ENCODE measurements at regions of chr3 and their contacts with region 1.

Region 1: GRCh38 chr3:186534113-186534669 is 10.0 kb downstream of the CRYGS start:
- DNase-seq: peak; percentile 57
- ATAC-seq: peak; percentile 95
- H3K4me3 Mint-ChIP-seq: no peak overlapping the region
- H3K27ac Mint-ChIP-seq: no peak overlapping the region
- H3K4me1 Mint-ChIP-seq: peaks cover 35% of the 10 kb centered on the region
- H3K27me3 Mint-ChIP-seq: no peaks in the 10 kb centered on the region

Region 2: DNA sequence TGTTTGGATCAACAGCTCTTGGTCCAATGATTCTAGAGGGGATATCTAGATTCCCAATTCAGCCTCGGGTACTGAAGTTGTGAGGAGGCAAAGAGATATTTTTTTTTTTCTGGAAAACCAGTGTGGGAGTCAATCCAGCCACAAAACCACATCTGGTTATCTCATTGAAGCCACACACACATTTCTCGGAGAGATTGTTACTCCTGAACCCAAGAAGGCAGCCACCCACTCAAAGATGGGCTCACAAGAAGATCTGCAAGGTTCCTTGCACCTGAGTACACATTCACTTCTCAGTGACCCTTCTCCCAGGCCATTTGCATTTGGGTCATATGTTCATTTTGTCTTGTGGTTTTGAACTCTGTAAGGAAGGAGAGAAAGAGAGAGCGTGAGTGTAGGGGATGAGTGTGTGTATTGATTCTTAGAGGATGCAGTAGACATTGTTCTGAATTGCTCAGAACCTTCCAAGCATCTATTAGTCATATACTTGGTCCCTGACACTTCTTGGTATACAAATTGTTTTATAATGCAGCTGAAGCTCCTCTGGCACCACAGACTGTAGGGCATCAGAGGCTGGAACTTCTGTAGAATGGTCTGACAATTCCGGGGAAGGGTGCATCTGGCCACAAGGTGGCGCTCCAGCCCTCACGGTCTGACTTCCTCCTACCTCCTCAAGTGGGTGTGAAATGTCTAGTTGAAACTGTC is 557.1 kb before region 1 on chr3:
- CTCF ChIA-PET with region 1: interaction called, 47 read pairs
- POLR2A ChIA-PET with region 1: no interaction called
- DNase-seq: peak; percentile 88
- ATAC-seq: peak; percentile 96
- H3K4me3 Mint-ChIP-seq: no peak overlapping the region
- H3K27ac Mint-ChIP-seq: no peak overlapping the region
- H3K4me1 Mint-ChIP-seq: peaks cover 12% of the 10 kb centered on the region
- H3K27me3 Mint-ChIP-seq: peaks cover 25% of the 10 kb centered on the region

Region 3: GRCh38 chr3:186519021-186519658 is 15.1 kb before region 1 on chr3:
- CTCF ChIA-PET with region 1: interaction called, 44 read pairs
- POLR2A ChIA-PET with region 1: interaction called, 7 read pairs
- DNase-seq: peak; percentile 73
- ATAC-seq: peak; percentile 80
- H3K4me3 Mint-ChIP-seq: peak overlapping the region; percentile 20
- H3K27ac Mint-ChIP-seq: peak overlapping the region; percentile 76
- H3K4me1 Mint-ChIP-seq: peaks cover 55% of the 10 kb centered on the region
- H3K27me3 Mint-ChIP-seq: peaks cover 5% of the 10 kb centered on the region